ENCODE measurements at regions of chr1 and their contacts with region 1.

Region 1: GRCh38 chr1:86774305-86775295 is 70.2 kb downstream of the SH3GLB1 start:
- DNase-seq: peak; percentile 71 to 88
- ATAC-seq: peak; percentile 95 to 96 (median 96)
- H3K4me3 ChIP-seq: peak overlapping the region; percentile 41
- H3K27ac ChIP-seq: peak overlapping the region; percentile 96
- H3K4me1 ChIP-seq: peaks cover 39% of the 10 kb centered on the region
- H3K27me3 ChIP-seq: no peaks in the 10 kb centered on the region
- CTCF ChIP-seq: no peak

Region 2: GRCh38 chr1:86704458-86704971 is 70.1 kb before region 1 on chr1 and contains the start of gene SH3GLB1:
- intact Hi-C with region 1: loop called in 1 of 2 experiments (anchors 2 kb)
- DNase-seq: peak; percentile 91 to 95
- ATAC-seq: peak; percentile 86 to 89 (median 88)
- H3K4me3 ChIP-seq: peak within 1 kb of the TSS; percentile 93
- H3K27ac ChIP-seq: peak within 1 kb of the TSS; percentile 99
- H3K4me1 ChIP-seq: peaks cover 27% of the 10 kb centered on the region
- H3K27me3 ChIP-seq: no peaks in the 10 kb centered on the region
- CTCF ChIP-seq: peak; percentile 90
- total RNA-seq, gene SH3GLB1: 158 to 315 (median 198) TPM

Region 3: GRCh38 chr1:86833461-86834215 is 59.0 kb after region 1 on chr1:
- intact Hi-C with region 1: loop called in 1 of 2 experiments (anchors 5 kb)
- DNase-seq: peak; percentile 61 to 70
- ATAC-seq: peak; percentile 87 to 98 (median 91)
- H3K4me3 ChIP-seq: no peak overlapping the region
- H3K27ac ChIP-seq: no peak overlapping the region
- H3K4me1 ChIP-seq: no peaks in the 10 kb centered on the region
- H3K27me3 ChIP-seq: no peaks in the 10 kb centered on the region
- CTCF ChIP-seq: peak; percentile 70